ENCODE measurements at regions of chr12 and their contacts with region 1.

Region 1: DNA sequence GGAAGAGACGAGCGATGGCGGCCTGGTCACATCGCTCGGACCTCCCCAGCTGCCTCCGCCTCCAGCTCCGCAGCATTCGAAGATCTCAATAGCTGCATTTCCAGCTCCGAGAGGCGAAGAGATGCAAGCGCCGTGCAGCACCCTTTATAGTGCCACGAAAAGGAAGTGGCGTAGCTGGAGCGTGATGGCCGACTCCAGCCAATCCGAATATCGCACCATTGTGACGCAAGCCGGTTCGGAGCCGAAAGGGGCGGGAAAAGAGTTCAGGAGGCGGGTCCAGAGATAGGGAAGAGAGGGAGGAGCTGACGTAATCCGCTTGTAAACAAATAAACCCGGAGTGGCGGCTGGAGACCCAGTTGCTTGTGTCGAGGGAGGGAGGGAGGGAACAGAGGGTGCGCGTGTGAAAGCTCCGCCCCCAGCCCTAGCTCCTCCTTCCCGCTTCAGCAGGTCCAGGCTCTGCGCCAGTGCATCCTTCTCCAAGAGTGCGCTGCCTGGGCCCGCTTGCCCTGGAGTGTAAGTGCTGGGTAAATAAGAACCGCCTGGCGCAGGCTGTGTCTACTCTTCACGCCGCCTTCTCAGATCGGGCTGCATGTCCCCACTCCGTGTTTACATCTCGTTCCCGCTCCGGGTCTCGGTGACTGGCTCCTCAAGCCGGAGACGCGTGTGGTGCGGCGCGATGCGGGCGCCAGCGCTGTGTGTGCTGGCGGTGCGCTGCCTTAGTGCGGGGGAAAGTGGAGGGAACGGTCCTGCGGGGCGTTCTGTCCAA is at the start of gene BTG1:
- DNase-seq: peak; percentile 99 to 100 (median 100)
- H3K4me3 ChIP-seq: peak within 1 kb of the TSS; percentile 92 to 99 (median 94)
- H3K4me3 Mint-ChIP-seq: peak within 1 kb of the TSS; percentile 98 to 99
- H3K27ac ChIP-seq: peak within 1 kb of the TSS; percentile 90 to 92
- H3K27ac Mint-ChIP-seq: peak within 1 kb of the TSS; percentile 96 to 99 (median 97)
- H3K4me1 ChIP-seq: peaks cover 23 to 61% of the 10 kb centered on the region in 2 donors
- H3K4me1 Mint-ChIP-seq: peaks cover 26% of the 10 kb centered on the region
- H3K27me3 ChIP-seq: no peaks in the 10 kb centered on the region
- H3K27me3 Mint-ChIP-seq: peaks cover 0 to 4% (median 2%) of the 10 kb centered on the region in 3 donors
- CTCF ChIP-seq: no peak
- polyA plus RNA-seq, gene BTG1: 189 to 242 (median 192) TPM

Region 2: DNA sequence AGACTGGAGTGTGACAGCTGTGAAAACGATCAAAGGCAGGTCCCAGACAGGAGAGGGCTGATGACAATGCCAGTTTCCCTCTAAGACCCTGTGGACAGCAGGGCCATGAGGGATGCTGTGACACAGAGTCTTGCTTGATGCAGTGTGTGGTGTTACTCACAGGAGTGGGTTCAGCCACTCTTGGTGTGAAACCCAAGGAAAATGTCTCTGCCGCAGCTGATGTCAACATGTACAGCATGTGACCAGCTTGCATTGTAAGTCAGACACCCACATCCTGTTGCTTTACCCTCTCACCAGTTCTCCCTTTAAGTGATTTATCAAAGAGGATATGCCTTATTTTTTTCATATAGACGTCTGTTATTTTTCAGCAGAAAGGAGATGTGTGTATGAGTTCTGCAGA is 268.9 kb before region 1 on chr12:
- intact Hi-C with region 1: loop called in 1 of 2 experiments (anchors 5 kb)
- DNase-seq: peak; percentile 94 to 98 (median 97)
- H3K4me3 ChIP-seq: peak overlapping the region in 1 of 3 experiments; percentile 22
- H3K4me3 Mint-ChIP-seq: peak overlapping the region in 1 of 2 donors; percentile 77
- H3K27ac ChIP-seq: peak overlapping the region; percentile 46 to 89
- H3K27ac Mint-ChIP-seq: peak overlapping the region; percentile 87 to 97 (median 93)
- H3K4me1 ChIP-seq: peaks cover 26 to 34% of the 10 kb centered on the region in 2 donors
- H3K4me1 Mint-ChIP-seq: peaks cover 29% of the 10 kb centered on the region
- H3K27me3 ChIP-seq: no peaks in the 10 kb centered on the region
- H3K27me3 Mint-ChIP-seq: peaks cover 0 to 2% (median 1%) of the 10 kb centered on the region in 3 donors
- CTCF ChIP-seq: no peak

Region 3: GRCh38 chr12:92300777-92301176 is 154.9 kb after region 1 on chr12:
- intact Hi-C with region 1: loop called in 1 of 2 experiments (anchors 2 kb)
- DNase-seq: peak; percentile 74 to 88 (median 80)
- H3K4me3 ChIP-seq: peak overlapping the region in 1 of 3 experiments; percentile 24
- H3K4me3 Mint-ChIP-seq: no peak overlapping the region
- H3K27ac ChIP-seq: peak overlapping the region; percentile 6 to 91
- H3K27ac Mint-ChIP-seq: no peak overlapping the region
- H3K4me1 ChIP-seq: peaks cover 50 to 54% of the 10 kb centered on the region in 2 donors
- H3K4me1 Mint-ChIP-seq: peaks cover 6% of the 10 kb centered on the region
- H3K27me3 ChIP-seq: no peaks in the 10 kb centered on the region
- H3K27me3 Mint-ChIP-seq: peaks cover 0 to 2% (median 0%) of the 10 kb centered on the region in 3 donors
- CTCF ChIP-seq: no peak

Region 4: DNA sequence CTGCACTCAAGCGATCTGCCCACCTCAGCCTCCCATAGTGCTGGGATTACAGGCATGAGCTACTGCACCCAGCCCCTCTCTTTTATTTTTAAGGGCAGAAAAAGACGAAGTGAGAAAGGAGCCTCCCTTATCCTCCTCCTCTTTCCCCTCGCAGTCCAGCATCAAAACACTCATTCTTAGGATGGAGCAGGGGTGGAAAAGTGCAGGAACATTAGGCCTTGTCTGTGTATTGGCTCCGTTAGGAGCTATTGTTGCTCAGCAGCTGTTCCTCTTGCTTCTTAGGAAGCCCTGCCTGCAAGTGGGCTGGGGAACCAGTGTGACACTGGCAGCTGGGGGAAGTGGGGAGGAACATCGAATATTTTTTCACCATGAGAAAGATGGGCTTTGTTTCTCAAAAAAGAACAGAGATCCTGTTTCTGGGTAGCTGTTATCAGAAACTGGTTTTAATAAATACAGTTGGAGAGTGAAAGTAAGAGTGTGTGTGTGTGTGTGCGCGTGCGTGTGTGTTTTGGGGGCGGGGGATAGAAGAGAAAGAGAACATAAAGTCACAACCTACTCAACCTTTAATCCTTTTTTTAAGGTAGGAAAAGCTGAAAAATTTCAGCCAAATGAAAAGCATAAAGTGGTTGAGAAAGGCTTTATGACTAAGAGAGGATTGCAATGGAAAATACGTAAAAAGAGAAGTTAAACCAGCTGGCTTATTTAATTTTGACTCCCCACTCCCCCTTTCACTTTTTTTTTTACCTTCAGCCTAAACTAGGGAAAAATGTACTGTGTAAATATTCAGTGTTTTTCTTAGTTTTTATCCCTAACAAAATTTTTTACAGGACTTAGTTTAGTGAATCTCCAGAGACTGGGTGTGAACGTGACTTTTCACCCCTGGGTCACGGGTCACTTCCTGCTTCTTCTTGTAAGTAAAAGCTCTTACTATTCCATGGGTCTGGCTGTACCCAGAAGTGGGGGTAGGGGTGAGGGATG is 359.6 kb after region 1 on chr12:
- intact Hi-C with region 1: loop called (anchors 5 kb)
- DNase-seq: peak; percentile 64 to 83 (median 74)
- H3K4me3 ChIP-seq: peak overlapping the region in 2 of 3 experiments; percentile 23 to 50
- H3K4me3 Mint-ChIP-seq: peak overlapping the region; percentile 40 to 78
- H3K27ac ChIP-seq: peak overlapping the region; percentile 93 to 99
- H3K27ac Mint-ChIP-seq: peak overlapping the region; percentile 98 to 100 (median 99)
- H3K4me1 ChIP-seq: peaks cover 43 to 52% of the 10 kb centered on the region in 2 donors
- H3K4me1 Mint-ChIP-seq: peaks cover 50% of the 10 kb centered on the region
- H3K27me3 ChIP-seq: no peaks in the 10 kb centered on the region
- H3K27me3 Mint-ChIP-seq: peaks cover 0 to 3% (median 0%) of the 10 kb centered on the region in 3 donors
- CTCF ChIP-seq: no peak

Region 5: GRCh38 chr12:92649511-92650227 is 503.8 kb after region 1 on chr12:
- intact Hi-C with region 1: loop called in 1 of 2 experiments (anchors 5 kb)
- DNase-seq: peak; percentile 58 to 71 (median 69)
- H3K4me3 ChIP-seq: peak overlapping the region in 1 of 3 experiments; percentile 34
- H3K4me3 Mint-ChIP-seq: peak overlapping the region; percentile 20 to 73
- H3K27ac ChIP-seq: peak overlapping the region in 1 of 2 donors; percentile 14
- H3K27ac Mint-ChIP-seq: peak overlapping the region; percentile 19 to 85 (median 63)
- H3K4me1 ChIP-seq: peaks cover 9 to 10% of the 10 kb centered on the region in 2 donors
- H3K4me1 Mint-ChIP-seq: peaks cover 15% of the 10 kb centered on the region
- H3K27me3 ChIP-seq: no peaks in the 10 kb centered on the region
- H3K27me3 Mint-ChIP-seq: peaks cover 0 to 3% (median 0%) of the 10 kb centered on the region in 3 donors
- CTCF ChIP-seq: peak; percentile 78